Heart right ventricle (tissue), 16 donors: ENCODE measurements at regions of chr21 and their contacts with region 1.

Region 1: GRCh38 chr21:39388038-39388810 is 39.3 kb upstream of the HMGN1 start:
- DNase-seq: peak; percentile 91 to 95
- ATAC-seq: peak; percentile 85 to 94 (median 88)
- H3K4me3 ChIP-seq: peak overlapping the region in 9 of 10 donors; percentile 32 to 65 (median 56)
- H3K27ac ChIP-seq: peak overlapping the region in 9 of 10 donors; percentile 5 to 83 (median 55)
- H3K4me1 ChIP-seq: peaks cover 5 to 47% (median 31%) of the 10 kb centered on the region in 9 donors
- H3K27me3 ChIP-seq: no peaks in the 10 kb centered on the region
- CTCF ChIP-seq: peak; percentile 83 to 98 (median 95)

Region 2: GRCh38 chr21:39183237-39184007 is 204.8 kb before region 1 on chr21 and contains the start of gene PSMG1:
- intact Hi-C with region 1: loop called in 3 of 10 experiments (anchors 5 to 10 kb)
- DNase-seq: peak; percentile 93 to 95
- ATAC-seq: peak; percentile 97 to 99 (median 98)
- H3K4me3 ChIP-seq: peak within 1 kb of the TSS; percentile 65 to 95 (median 88)
- H3K27ac ChIP-seq: peak within 1 kb of the TSS; percentile 79 to 95 (median 92)
- H3K4me1 ChIP-seq: peaks cover 0 to 27% (median 21%) of the 10 kb centered on the region in 9 donors
- H3K27me3 ChIP-seq: no peaks in the 10 kb centered on the region
- CTCF ChIP-seq: no peak
- total RNA-seq, gene PSMG1: 14.8 to 29.3 (median 23.0) TPM

Region 3: GRCh38 chr21:39189857-39190604 is 198.2 kb before region 1 on chr21:
- intact Hi-C with region 1: loop called in 3 of 10 experiments (anchors 5 to 10 kb)
- DNase-seq: no peak
- ATAC-seq: no peak
- H3K4me3 ChIP-seq: no peak overlapping the region
- H3K27ac ChIP-seq: no peak overlapping the region
- H3K4me1 ChIP-seq: peaks cover 0 to 7% (median 0%) of the 10 kb centered on the region in 9 donors
- H3K27me3 ChIP-seq: no peaks in the 10 kb centered on the region
- CTCF ChIP-seq: no peak

Region 4: DNA sequence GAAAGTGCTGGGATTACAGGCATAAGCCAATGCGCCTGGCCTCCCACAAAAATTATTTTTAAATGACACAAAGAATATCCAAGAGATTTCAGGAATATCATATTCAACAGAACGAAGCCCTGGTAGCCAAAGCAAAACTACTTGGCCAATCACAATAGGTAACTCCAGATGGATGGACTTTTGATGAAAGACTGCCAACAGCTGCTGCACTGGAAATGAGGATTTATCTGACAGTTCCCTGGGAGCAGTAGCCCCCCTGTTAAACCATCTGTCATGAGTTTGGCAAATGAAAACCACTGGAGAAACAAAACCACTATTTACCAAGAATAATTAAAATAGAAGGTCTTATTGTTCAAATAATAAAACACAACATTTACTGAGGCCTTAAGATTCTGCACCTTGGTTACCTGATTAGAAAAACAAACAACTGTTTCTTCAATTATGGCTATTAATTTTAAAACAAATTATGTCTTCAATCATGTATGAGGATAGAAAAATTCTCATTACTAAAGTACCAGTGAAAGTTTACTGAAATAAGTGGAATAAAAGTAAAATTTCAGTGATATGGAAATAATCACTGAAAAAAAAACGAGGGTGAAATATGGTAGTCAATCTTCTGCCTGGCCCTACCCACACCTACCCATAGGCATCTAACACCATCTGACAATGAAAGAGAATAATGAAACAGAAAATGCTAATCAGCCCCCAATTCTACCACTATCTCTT is 170.7 kb before region 1 on chr21:
- intact Hi-C with region 1: loop called in 1 of 10 experiments (anchors 10 kb)
- DNase-seq: no peak
- ATAC-seq: no peak
- H3K4me3 ChIP-seq: no peak overlapping the region
- H3K27ac ChIP-seq: no peak overlapping the region
- H3K4me1 ChIP-seq: peaks cover 0 to 13% (median 0%) of the 10 kb centered on the region in 9 donors
- H3K27me3 ChIP-seq: no peaks in the 10 kb centered on the region
- CTCF ChIP-seq: no peak

Region 5: DNA sequence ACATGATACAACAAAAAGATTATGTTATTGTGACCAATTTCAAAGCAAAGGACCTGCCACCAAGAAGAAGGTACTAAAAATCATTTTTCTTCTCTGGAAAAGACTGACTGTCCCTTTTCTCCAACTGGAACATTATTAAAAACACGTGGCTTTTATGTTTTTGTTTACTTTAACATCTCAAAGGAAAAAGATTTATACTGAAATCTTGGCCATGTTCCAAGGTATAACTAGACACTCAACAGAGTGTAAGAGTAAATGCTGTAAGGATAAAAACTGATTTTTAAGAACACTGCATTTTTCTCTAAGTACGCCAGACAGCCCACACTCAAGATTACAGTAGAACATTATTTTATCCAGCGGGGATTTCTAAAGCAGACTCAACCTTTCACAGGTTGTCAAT is 136.9 kb before region 1 on chr21:
- intact Hi-C with region 1: loop called in 1 of 10 experiments (anchors 5 kb)
- DNase-seq: no peak
- ATAC-seq: no peak
- H3K4me3 ChIP-seq: no peak overlapping the region
- H3K27ac ChIP-seq: peak overlapping the region in 1 of 10 donors; percentile 51
- H3K4me1 ChIP-seq: peaks cover 0 to 28% (median 10%) of the 10 kb centered on the region in 9 donors
- H3K27me3 ChIP-seq: no peaks in the 10 kb centered on the region
- CTCF ChIP-seq: no peak

Region 6: GRCh38 chr21:39313571-39314142 is 74.6 kb before region 1 on chr21 and contains the start of gene BRWD1:
- intact Hi-C with region 1: loop called (anchors 1 to 10 kb)
- DNase-seq: peak; percentile 84
- ATAC-seq: peak; percentile 77 to 90 (median 84)
- H3K4me3 ChIP-seq: peak within 1 kb of the TSS; percentile 64 to 97 (median 82)
- H3K27ac ChIP-seq: peak within 1 kb of the TSS; percentile 94 to 100 (median 99)
- H3K4me1 ChIP-seq: peaks cover 4 to 41% (median 21%) of the 10 kb centered on the region in 9 donors
- H3K27me3 ChIP-seq: no peaks in the 10 kb centered on the region
- CTCF ChIP-seq: peak in 7 of 9 donors; percentile 44 to 68 (median 55)
- total RNA-seq, gene BRWD1: 30.2 to 38.8 (median 34.6) TPM

Region 7: DNA sequence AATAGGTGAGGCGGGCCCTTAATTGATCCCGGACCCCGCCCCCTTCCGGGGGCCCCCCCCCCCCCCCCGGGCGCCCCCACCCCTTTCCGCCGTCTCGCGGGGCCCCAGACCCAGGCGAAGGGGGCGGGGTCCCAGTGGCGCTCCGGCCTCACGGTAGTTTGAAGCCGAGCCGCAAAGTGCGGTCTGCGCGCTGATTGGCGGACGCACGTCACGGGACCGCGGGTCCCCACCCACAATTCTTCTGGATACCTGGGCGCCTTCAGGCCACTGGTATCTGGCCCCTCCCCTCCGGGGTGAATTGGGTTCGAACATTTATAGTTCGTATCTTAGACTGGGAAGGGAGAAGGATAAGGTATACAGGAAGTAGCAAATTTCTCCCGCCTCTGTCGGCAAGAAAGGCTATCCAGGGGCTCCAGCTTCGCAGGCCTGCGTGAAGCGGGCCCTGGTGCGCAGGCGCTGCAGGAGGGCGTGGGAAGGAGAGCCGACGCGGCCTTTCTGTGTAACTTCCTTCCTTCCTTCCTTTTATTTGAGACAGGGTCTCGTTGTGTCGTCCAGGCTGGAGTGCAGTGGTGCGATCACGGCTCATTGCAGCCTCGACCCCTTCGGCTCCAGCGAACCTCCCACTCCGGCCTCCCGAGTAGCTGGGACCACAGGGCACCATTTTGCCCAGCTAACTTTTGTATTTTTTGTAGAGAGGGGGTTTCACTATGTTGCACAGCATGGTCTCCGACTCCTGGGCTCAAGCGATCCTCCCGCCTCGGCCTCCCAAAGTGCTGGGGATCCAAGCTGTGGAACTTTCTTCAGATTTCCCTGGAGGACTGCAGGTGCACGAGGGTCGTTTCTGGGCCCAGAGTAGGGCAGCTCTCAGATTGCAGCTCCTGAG is 38.8 kb before region 1 on chr21:
- intact Hi-C with region 1: loop called in 6 of 10 experiments (anchors 2 to 5 kb)
- DNase-seq: peak; percentile 94 to 95
- ATAC-seq: peak; percentile 94 to 98 (median 97)
- H3K4me3 ChIP-seq: peak overlapping the region; percentile 53 to 90 (median 78)
- H3K27ac ChIP-seq: peak overlapping the region; percentile 83 to 99 (median 93)
- H3K4me1 ChIP-seq: peaks cover 2 to 44% (median 32%) of the 10 kb centered on the region in 9 donors
- H3K27me3 ChIP-seq: no peaks in the 10 kb centered on the region
- CTCF ChIP-seq: no peak

Region 8: DNA sequence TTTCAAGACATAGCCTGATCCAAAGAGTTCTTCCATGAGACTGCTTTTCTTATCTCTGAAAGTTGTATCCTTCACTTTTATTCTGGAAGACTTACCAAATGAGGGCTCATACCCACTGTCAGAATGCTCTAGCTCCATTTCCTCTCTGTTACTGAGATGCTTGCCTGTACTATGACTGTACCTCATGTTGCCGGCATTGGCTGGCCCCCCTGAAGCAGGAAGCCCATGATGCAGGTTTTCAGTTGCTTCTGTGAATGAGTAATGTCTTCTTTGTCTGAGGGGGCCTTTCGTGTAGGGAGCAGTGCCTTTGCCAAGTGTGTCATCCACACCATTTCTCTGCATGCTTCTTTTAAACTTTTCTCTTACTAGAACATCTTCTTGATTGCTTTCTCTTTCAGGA is 17.8 kb after region 1 on chr21:
- intact Hi-C with region 1: no loop called
- DNase-seq: no peak
- ATAC-seq: no peak
- H3K4me3 ChIP-seq: no peak overlapping the region
- H3K27ac ChIP-seq: no peak overlapping the region
- H3K4me1 ChIP-seq: no peaks in the 10 kb centered on the region
- H3K27me3 ChIP-seq: no peaks in the 10 kb centered on the region
- CTCF ChIP-seq: no peak

Region 9: GRCh38 chr21:39445321-39446269 is 57.4 kb after region 1 on chr21 and contains the start of gene LCA5L:
- intact Hi-C with region 1: no loop called
- DNase-seq: peak; percentile 90 to 96
- ATAC-seq: peak; percentile 94 to 96 (median 94)
- H3K4me3 ChIP-seq: peak within 1 kb of the TSS; percentile 66 to 96 (median 89)
- H3K27ac ChIP-seq: peak within 1 kb of the TSS; percentile 68 to 97 (median 94)
- H3K4me1 ChIP-seq: peaks cover 4 to 24% (median 15%) of the 10 kb centered on the region in 9 donors
- H3K27me3 ChIP-seq: no peaks in the 10 kb centered on the region
- CTCF ChIP-seq: peak in 3 of 9 donors; percentile 20 to 36 (median 25)
- total RNA-seq, gene LCA5L: 0.21 to 2.1 (median 0.78) TPM